Activated CD8-positive, alpha-beta T cell treated with anti-CD3 and anti-CD28 coated beads for 36 hours (primary cell): ENCODE measurements at regions of chr5 and their contacts with region 1.

Region 1: GRCh38 chr5:108661590-108662219 is 86.0 kb upstream of the FER start:
- DNase-seq: no peak
- ATAC-seq: no peak
- H3K4me3 Mint-ChIP-seq: no peak overlapping the region
- H3K27ac Mint-ChIP-seq: no peak overlapping the region
- H3K4me1 Mint-ChIP-seq: no peaks in the 10 kb centered on the region
- H3K27me3 Mint-ChIP-seq: peaks cover 11% of the 10 kb centered on the region
- CTCF ChIP-seq: no peak

Region 2: GRCh38 chr5:108642167-108642906 is 19.4 kb before region 1 on chr5:
- CTCF ChIA-PET with region 1: interaction called, 16 read pairs
- POLR2A ChIA-PET with region 1: no interaction called
- intact Hi-C with region 1: no loop called
- DNase-seq: peak; percentile 71
- ATAC-seq: peak; percentile 97
- H3K4me3 Mint-ChIP-seq: no peak overlapping the region
- H3K27ac Mint-ChIP-seq: peak overlapping the region; percentile 2
- H3K4me1 Mint-ChIP-seq: peaks cover 2% of the 10 kb centered on the region
- H3K27me3 Mint-ChIP-seq: no peaks in the 10 kb centered on the region
- CTCF ChIP-seq: peak; percentile 89